ENCODE measurements at regions of chr9 and their contacts with region 1.

Region 1: GRCh38 chr9:694403-695154 is 146.9 kb upstream of the DMRT1 start:
- DNase-seq: peak; percentile 30
- H3K4me3 Mint-ChIP-seq: peak overlapping the region; percentile 39
- H3K27ac Mint-ChIP-seq: peak overlapping the region; percentile 51
- H3K4me1 Mint-ChIP-seq: peaks cover 36% of the 10 kb centered on the region
- H3K27me3 Mint-ChIP-seq: no peaks in the 10 kb centered on the region
- CTCF ChIP-seq: no peak

Region 2: DNA sequence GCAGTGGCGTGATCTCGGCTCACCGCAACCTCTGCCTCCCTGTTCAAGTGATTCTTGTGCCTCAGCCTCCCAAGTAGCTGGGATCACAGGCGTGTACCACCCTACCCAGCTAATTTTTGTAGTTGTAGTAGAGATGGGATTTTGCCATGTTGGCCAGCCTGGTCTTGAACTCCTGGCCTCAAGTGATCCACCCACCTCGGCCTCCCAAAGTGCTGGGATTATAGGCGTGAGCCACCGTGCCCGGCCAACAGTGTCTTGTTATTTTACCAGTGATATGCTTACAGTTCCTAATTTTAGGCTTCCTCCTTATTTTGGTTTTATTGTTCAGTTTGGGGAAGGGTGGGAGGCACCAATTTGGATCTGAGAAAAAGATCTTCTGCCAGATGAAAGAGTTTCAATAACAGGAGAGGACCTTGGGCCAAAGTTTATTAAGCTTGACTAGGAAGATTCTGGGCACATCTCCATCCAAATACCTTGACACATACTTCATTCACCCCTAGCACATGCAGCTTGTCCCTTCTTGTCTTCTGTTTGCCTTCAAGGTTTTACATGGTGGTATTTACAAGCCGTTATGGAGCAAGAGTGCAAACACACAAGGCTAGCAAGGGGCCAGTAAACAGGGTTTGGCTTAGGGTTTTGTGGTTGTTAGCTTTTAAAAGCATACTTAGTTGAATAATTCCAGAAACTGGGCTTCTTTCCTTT is 21.2 kb before region 1 on chr9:
- CTCF ChIA-PET with region 1: no interaction called
- intact Hi-C with region 1: no loop called
- DNase-seq: no peak
- H3K4me3 Mint-ChIP-seq: no peak overlapping the region
- H3K27ac Mint-ChIP-seq: no peak overlapping the region
- H3K4me1 Mint-ChIP-seq: peaks cover 17% of the 10 kb centered on the region
- H3K27me3 Mint-ChIP-seq: no peaks in the 10 kb centered on the region
- CTCF ChIP-seq: no peak

Region 3: DNA sequence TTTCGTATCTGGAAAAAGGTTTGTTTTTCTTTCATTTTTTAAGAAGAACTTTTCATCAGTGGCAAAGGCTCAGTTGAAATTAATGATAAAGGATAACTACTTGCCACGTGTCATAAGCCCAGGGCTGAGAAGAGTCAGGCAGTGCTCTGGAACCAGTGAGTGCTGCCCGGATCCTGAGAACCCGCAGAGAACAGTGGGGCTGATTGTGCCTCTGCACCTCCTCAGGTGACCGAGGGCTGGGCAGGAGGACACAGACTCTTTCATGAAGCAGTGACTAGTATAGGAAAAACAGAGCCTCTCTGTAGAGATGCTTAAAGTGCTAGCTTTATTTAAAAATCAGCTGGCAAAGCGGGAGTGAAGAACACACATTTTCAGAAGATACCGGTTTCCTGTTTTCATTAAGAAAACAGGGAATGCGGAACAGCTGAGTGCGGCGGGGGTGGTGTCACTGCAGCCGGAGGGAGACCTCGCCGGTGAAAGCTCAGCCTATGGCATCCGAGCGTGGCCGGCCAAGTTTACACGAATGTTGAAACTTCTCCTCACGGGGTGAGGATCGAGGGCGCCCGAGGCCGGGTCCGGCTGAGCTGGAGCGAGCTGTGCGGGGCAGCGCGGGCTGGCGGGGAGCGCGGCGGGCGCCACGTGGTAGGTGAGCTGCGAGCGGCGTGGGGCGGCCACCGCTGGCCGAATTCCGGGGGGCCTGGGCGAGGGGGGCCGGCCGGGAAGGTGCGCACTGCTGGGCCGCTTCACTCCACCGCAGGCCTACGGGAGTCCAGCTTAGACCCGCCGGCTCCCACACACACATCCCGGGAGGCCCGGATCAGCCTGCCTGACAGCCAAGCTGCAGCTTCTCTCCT is 12.3 kb after region 1 on chr9:
- CTCF ChIA-PET with region 1: no interaction called
- intact Hi-C with region 1: no loop called
- DNase-seq: peak; percentile 66
- H3K4me3 Mint-ChIP-seq: peak overlapping the region; percentile 74
- H3K27ac Mint-ChIP-seq: peak overlapping the region; percentile 81
- H3K4me1 Mint-ChIP-seq: peaks cover 13% of the 10 kb centered on the region
- H3K27me3 Mint-ChIP-seq: no peaks in the 10 kb centered on the region
- CTCF ChIP-seq: no peak

Region 4: GRCh38 chr9:763692-764524 is 69.3 kb after region 1 on chr9:
- CTCF ChIA-PET with region 1: no interaction called
- intact Hi-C with region 1: loop called (anchors 5 kb)
- DNase-seq: peak; percentile 75
- H3K4me3 Mint-ChIP-seq: no peak overlapping the region
- H3K27ac Mint-ChIP-seq: no peak overlapping the region
- H3K4me1 Mint-ChIP-seq: peaks cover 7% of the 10 kb centered on the region
- H3K27me3 Mint-ChIP-seq: peaks cover 40% of the 10 kb centered on the region
- CTCF ChIP-seq: peak; percentile 66